ENCODE measurements at regions of chr7 and their contacts with region 1.

Region 1: GRCh38 chr7:138797841-138798271 is at the starts of genes ATP6V0A4 and TMEM213:
- DNase-seq: peak; percentile 72
- ATAC-seq: peak; percentile 96
- H3K4me3 Mint-ChIP-seq: peak within 1 kb of the TSS; percentile 57
- H3K27ac Mint-ChIP-seq: peak within 1 kb of the TSS; percentile 55
- H3K4me1 Mint-ChIP-seq: peaks cover 45% of the 10 kb centered on the region
- H3K27me3 Mint-ChIP-seq: no peaks in the 10 kb centered on the region
- CTCF ChIP-seq: no peak
- total RNA-seq, gene ATP6V0A4: 1.1 to 2.0 TPM (median 1.3 TPM) in 3 replicates
- total RNA-seq, gene TMEM213: 0.11 to 0.18 TPM (median 0.11 TPM) in 3 replicates

Region 2: DNA sequence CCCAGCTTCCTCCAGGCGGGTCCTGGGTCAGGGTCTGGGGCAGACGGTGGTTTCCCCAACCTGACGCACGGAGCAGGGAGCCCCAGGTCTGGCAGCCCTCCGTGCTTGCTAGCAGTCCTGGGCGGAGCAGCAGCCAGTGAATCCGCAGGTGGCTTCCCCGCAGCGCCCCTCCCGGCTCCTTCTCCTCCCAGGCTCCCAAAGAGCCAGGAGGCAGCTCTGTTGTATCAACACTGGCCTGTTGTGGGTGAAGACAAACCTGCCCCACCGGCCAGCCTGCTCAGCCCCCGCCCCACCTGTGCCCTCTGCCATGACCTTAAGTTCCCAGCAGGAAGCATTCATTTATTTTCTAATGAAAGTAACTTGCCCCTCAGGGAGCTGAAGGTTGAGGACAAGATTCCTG is 24.0 kb before region 1 on chr7:
- CTCF ChIA-PET with region 1: interaction called, 12 read pairs
- POLR2A ChIA-PET with region 1: no interaction called
- DNase-seq: peak; percentile 77
- ATAC-seq: peak; percentile 95
- H3K4me3 Mint-ChIP-seq: no peak overlapping the region
- H3K27ac Mint-ChIP-seq: no peak overlapping the region
- H3K4me1 Mint-ChIP-seq: peaks cover 27% of the 10 kb centered on the region
- H3K27me3 Mint-ChIP-seq: peaks cover 7% of the 10 kb centered on the region
- CTCF ChIP-seq: no peak

Region 3: GRCh38 chr7:138865843-138866242 is 68.0 kb after region 1 on chr7:
- CTCF ChIA-PET with region 1: no interaction called
- POLR2A ChIA-PET with region 1: no interaction called
- DNase-seq: peak; percentile 24
- ATAC-seq: peak; percentile 84
- H3K4me3 Mint-ChIP-seq: no peak overlapping the region
- H3K27ac Mint-ChIP-seq: peak overlapping the region; percentile 77; the same call in 1 of the 2 replicates
- H3K4me1 Mint-ChIP-seq: no peaks in the 10 kb centered on the region
- H3K27me3 Mint-ChIP-seq: no peaks in the 10 kb centered on the region
- CTCF ChIP-seq: 0 out of 2 replicates have a peak, but pooled peaks have one; percentile 19